CD8-positive, alpha-beta T cell (primary cell): ENCODE measurements at regions of chr17 and their contacts with region 1.

Region 1: GRCh38 chr17:37759014-37759637 is 14.3 kb upstream of the HNF1B start:
- DNase-seq: no peak
- ATAC-seq: no peak
- H3K4me3 ChIP-seq: no peak overlapping the region
- H3K4me3 Mint-ChIP-seq: no peak overlapping the region
- H3K27ac ChIP-seq: no peak overlapping the region
- H3K27ac Mint-ChIP-seq: no peak overlapping the region
- H3K4me1 ChIP-seq: no peaks in the 10 kb centered on the region
- H3K4me1 Mint-ChIP-seq: peaks cover 3% of the 10 kb centered on the region
- H3K27me3 ChIP-seq: peaks cover 4 to 5% of the 10 kb centered on the region in 2 experiments
- H3K27me3 Mint-ChIP-seq: peaks cover 30% of the 10 kb centered on the region
- CTCF ChIP-seq: no peak

Region 2: GRCh38 chr17:36948717-36949460 is 810.2 kb before region 1 on chr17 and contains the start of gene AATF:
- CTCF ChIA-PET with region 1: no interaction called
- POLR2A ChIA-PET with region 1: no interaction called
- intact Hi-C with region 1: no loop called
- DNase-seq: peak; percentile 82 to 99 (median 96)
- ATAC-seq: peak; percentile 91
- H3K4me3 ChIP-seq: peak within 1 kb of the TSS; percentile 81 to 91
- H3K4me3 Mint-ChIP-seq: peak within 1 kb of the TSS; percentile 98
- H3K27ac ChIP-seq: peak within 1 kb of the TSS; percentile 88 to 90
- H3K27ac Mint-ChIP-seq: peak within 1 kb of the TSS; percentile 98
- H3K4me1 ChIP-seq: peaks cover 26% of the 10 kb centered on the region
- H3K4me1 Mint-ChIP-seq: peaks cover 60% of the 10 kb centered on the region
- H3K27me3 ChIP-seq: peaks cover 28 to 34% of the 10 kb centered on the region in 2 experiments
- H3K27me3 Mint-ChIP-seq: peaks cover 31% of the 10 kb centered on the region
- CTCF ChIP-seq: no peak
- total RNA-seq, gene AATF: 49.5 to 51.5 TPM

Region 3: GRCh38 chr17:37770631-37771518 is 11.7 kb after region 1 on chr17:
- CTCF ChIA-PET with region 1: no interaction called
- POLR2A ChIA-PET with region 1: no interaction called
- intact Hi-C with region 1: loop called in 1 of 2 experiments (anchors 2 kb)
- DNase-seq: peak in 4 of 9 experiments; percentile 10 to 50 (median 22)
- ATAC-seq: no peak
- H3K4me3 ChIP-seq: no peak overlapping the region
- H3K4me3 Mint-ChIP-seq: no peak overlapping the region
- H3K27ac ChIP-seq: no peak overlapping the region
- H3K27ac Mint-ChIP-seq: no peak overlapping the region
- H3K4me1 ChIP-seq: no peaks in the 10 kb centered on the region
- H3K4me1 Mint-ChIP-seq: peaks cover 4% of the 10 kb centered on the region
- H3K27me3 ChIP-seq: peaks cover 0 to 2% of the 10 kb centered on the region in 2 experiments
- H3K27me3 Mint-ChIP-seq: peaks cover 17% of the 10 kb centered on the region
- CTCF ChIP-seq: peak; percentile 25

Region 4: GRCh38 chr17:37781451-37781850 is 22.3 kb after region 1 on chr17:
- CTCF ChIA-PET with region 1: no interaction called
- POLR2A ChIA-PET with region 1: no interaction called
- intact Hi-C with region 1: no loop called
- DNase-seq: no peak
- ATAC-seq: no peak
- H3K4me3 ChIP-seq: no peak overlapping the region
- H3K4me3 Mint-ChIP-seq: no peak overlapping the region
- H3K27ac ChIP-seq: no peak overlapping the region
- H3K27ac Mint-ChIP-seq: no peak overlapping the region
- H3K4me1 ChIP-seq: no peaks in the 10 kb centered on the region
- H3K4me1 Mint-ChIP-seq: no peaks in the 10 kb centered on the region
- H3K27me3 ChIP-seq: no peaks in the 10 kb centered on the region
- H3K27me3 Mint-ChIP-seq: peaks cover 9% of the 10 kb centered on the region
- CTCF ChIP-seq: no peak

Region 5: GRCh38 chr17:37859451-37859850 is 100.3 kb after region 1 on chr17:
- CTCF ChIA-PET with region 1: no interaction called
- POLR2A ChIA-PET with region 1: no interaction called
- intact Hi-C with region 1: no loop called
- DNase-seq: no peak
- ATAC-seq: no peak
- H3K4me3 ChIP-seq: no peak overlapping the region
- H3K4me3 Mint-ChIP-seq: no peak overlapping the region
- H3K27ac ChIP-seq: no peak overlapping the region
- H3K27ac Mint-ChIP-seq: no peak overlapping the region
- H3K4me1 ChIP-seq: no peaks in the 10 kb centered on the region
- H3K4me1 Mint-ChIP-seq: no peaks in the 10 kb centered on the region
- H3K27me3 ChIP-seq: no peaks in the 10 kb centered on the region
- H3K27me3 Mint-ChIP-seq: peaks cover 17% of the 10 kb centered on the region
- CTCF ChIP-seq: no peak